AG04449 (cell line): ENCODE measurements at regions of chr4 and their contacts with region 1.

Region 1: GRCh38 chr4:77618383-77619122 is 12.9 kb downstream of the CXCL13 start:
- DNase-seq: peak; percentile 5
- H3K4me3 ChIP-seq: no peak overlapping the region
- CTCF ChIP-seq: peak; percentile 76

Region 2: DNA sequence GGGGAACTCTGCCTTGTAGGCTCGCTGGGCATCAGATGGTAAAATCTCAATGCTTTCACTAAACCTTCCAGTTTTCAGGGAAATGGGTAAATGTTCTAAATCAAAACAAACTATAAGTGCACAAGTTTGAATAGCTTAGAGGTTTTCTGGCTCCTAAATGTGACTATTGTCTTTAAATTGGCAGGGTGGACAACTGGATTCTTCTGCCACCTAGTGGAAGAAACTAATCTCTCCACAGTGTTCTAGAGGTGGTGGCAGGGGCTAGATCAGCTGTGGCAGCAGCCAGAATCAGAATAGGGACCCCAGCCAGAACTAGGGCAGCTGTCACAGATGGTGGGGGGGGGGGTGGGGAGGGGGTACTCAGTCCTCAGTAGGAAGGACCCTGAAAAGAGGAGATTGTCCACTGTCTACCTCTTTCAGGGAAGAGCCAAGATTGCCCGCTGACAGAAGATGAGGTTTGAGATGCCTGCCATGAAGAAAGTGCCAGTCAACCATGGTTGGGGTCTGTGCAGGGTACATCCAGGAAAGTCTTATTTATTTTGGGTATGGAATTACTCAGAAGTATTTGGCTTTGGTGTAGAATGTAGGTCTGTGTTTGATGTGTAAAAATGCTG is 260.1 kb before region 1 on chr4:
- CTCF ChIA-PET with region 1: interaction called, 10 read pairs
- POLR2A ChIA-PET with region 1: no interaction called
- DNase-seq: no peak
- H3K4me3 ChIP-seq: no peak overlapping the region
- CTCF ChIP-seq: peak; percentile 58

Region 3: GRCh38 chr4:77465271-77465670 is 153.3 kb before region 1 on chr4:
- CTCF ChIA-PET with region 1: interaction called, 12 read pairs
- POLR2A ChIA-PET with region 1: no interaction called
- DNase-seq: no peak
- H3K4me3 ChIP-seq: no peak overlapping the region
- CTCF ChIP-seq: peak; percentile 42

Region 4: DNA sequence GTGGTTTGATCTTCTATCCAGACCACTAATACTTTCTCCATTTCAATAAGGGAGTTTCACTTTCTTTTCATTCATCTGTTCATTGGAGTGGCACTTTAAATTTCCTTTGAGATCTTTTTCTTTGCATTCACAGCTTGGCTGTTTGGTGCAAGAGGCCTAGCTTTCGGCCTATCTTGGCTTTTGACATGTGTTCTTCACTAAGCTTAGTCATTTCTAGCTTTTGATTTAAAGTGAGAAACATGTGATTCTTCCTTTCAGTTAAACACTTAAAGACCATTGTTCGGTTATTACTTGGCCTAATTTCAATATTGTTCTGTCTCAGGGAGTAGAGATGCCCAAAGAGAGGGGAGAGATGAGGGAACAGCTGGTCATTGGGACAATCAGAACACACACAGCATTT is 11.3 kb after region 1 on chr4:
- CTCF ChIA-PET with region 1: interaction called, 15 read pairs
- POLR2A ChIA-PET with region 1: no interaction called
- DNase-seq: no peak
- H3K4me3 ChIP-seq: no peak overlapping the region
- CTCF ChIP-seq: no peak

Region 5: GRCh38 chr4:77697860-77698590 is 79.5 kb after region 1 on chr4:
- CTCF ChIA-PET with region 1: interaction called, 16 read pairs
- POLR2A ChIA-PET with region 1: no interaction called
- DNase-seq: peak; percentile 24
- H3K4me3 ChIP-seq: no peak overlapping the region; the same call in 1 of the 2 replicates
- CTCF ChIP-seq: peak; percentile 56